Heart left ventricle (tissue), 16 donors: ENCODE measurements at regions of chr10 and their contacts with region 1.

Region 1: GRCh38 chr10:10520491-10521385 is 496.9 kb upstream of the CELF2 start:
- DNase-seq: no peak
- ATAC-seq: no peak
- H3K4me3 ChIP-seq: no peak overlapping the region
- H3K27ac ChIP-seq: no peak overlapping the region
- H3K4me1 ChIP-seq: peaks cover 0 to 6% (median 0%) of the 10 kb centered on the region in 12 donors
- H3K27me3 ChIP-seq: no peaks in the 10 kb centered on the region
- CTCF ChIP-seq: no peak
- POLR2A ChIP-seq: no peak

Region 2: DNA sequence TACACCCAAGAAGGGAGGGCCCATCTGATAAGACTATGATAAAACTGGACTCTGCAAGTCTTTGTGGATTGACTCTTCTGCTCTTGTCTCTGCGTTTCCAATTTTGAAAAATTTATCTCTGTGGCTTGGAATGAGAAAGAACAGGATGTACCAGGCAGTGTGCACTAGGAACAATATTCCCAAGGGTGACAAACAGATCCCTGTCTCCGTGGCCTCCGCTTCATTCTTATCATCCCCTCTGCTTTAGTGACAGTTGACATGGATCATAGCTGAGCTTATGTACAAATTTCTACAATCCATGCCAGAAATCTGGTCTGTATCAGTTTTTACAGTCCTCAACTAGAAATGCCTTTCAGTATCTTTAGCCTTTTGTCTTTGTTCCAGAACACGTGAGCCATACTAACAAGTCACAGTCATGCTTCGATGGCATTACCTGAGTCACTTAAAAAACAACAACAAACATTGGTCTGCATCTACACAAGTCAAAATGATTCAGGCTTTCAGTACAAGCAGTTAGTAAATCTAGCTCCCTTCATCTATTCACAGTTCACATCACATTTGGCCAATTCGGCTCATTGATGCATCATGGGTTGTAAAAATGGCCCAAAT is 103.3 kb after region 1 on chr10:
- intact Hi-C with region 1: no loop called
- DNase-seq: no peak
- ATAC-seq: peak; percentile 79 to 94 (median 92)
- H3K4me3 ChIP-seq: no peak overlapping the region
- H3K27ac ChIP-seq: peak overlapping the region; percentile 3 to 61 (median 52)
- H3K4me1 ChIP-seq: peaks cover 0 to 35% (median 12%) of the 10 kb centered on the region in 12 donors
- H3K27me3 ChIP-seq: no peaks in the 10 kb centered on the region
- CTCF ChIP-seq: no peak
- POLR2A ChIP-seq: no peak

Region 3: GRCh38 chr10:10662716-10663408 is 142.1 kb after region 1 on chr10:
- intact Hi-C with region 1: loop called in 1 of 10 experiments (anchors 10 kb)
- DNase-seq: no peak
- ATAC-seq: peak in 2 of 4 donors; percentile 39 to 58
- H3K4me3 ChIP-seq: no peak overlapping the region
- H3K27ac ChIP-seq: peak overlapping the region in 9 of 12 donors; percentile 17 to 56 (median 42)
- H3K4me1 ChIP-seq: peaks cover 0 to 34% (median 6%) of the 10 kb centered on the region in 12 donors
- H3K27me3 ChIP-seq: no peaks in the 10 kb centered on the region
- CTCF ChIP-seq: no peak
- POLR2A ChIP-seq: no peak

Region 4: DNA sequence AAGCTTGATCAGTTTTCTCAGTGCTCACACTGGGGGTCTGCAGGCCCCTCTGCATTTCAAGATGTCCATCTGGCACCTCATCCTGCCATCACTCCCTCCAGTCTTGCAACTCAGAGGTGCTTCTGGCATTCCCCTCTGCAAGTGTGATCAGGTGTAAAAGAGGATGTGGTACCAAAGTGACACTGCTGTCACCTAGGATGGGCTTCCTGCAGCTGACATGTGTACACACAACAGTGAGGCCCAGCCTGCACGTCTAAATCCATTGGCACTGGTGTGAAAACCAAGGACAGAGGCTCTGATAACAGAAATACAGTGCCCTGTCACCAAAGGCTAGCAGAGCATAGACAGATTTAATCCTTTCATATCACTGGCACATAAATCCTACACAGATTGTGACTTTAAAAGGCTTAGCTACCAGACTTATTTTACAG is 334.4 kb after region 1 on chr10:
- intact Hi-C with region 1: no loop called
- DNase-seq: no peak
- ATAC-seq: peak; percentile 38 to 72 (median 67)
- H3K4me3 ChIP-seq: no peak overlapping the region
- H3K27ac ChIP-seq: no peak overlapping the region
- H3K4me1 ChIP-seq: peaks cover 0 to 10% (median 0%) of the 10 kb centered on the region in 12 donors
- H3K27me3 ChIP-seq: no peaks in the 10 kb centered on the region
- CTCF ChIP-seq: no peak
- POLR2A ChIP-seq: no peak

Region 5: GRCh38 chr10:11175823-11176243 is 655.1 kb after region 1 on chr10:
- intact Hi-C with region 1: no loop called
- DNase-seq: no peak
- ATAC-seq: peak in 3 of 4 donors; percentile 11 to 29 (median 13)
- H3K4me3 ChIP-seq: peak overlapping the region in 1 of 12 donors; percentile 45
- H3K27ac ChIP-seq: peak overlapping the region in 6 of 12 donors; percentile 17 to 98 (median 42)
- H3K4me1 ChIP-seq: peaks cover 0 to 98% (median 54%) of the 10 kb centered on the region in 12 donors
- H3K27me3 ChIP-seq: no peaks in the 10 kb centered on the region
- CTCF ChIP-seq: no peak
- POLR2A ChIP-seq: no peak